ENCODE measurements at regions of chr18 and their contacts with region 1.

Region 1: GRCh38 chr18:37537868-37538525 is 27.6 kb downstream of the CELF4 start:
- DNase-seq: peak in 1 of 2 experiments; percentile 95
- H3K4me3 ChIP-seq: peak overlapping the region in 2 of 4 experiments; percentile 34 to 52; a peak in 3 of 8 replicates
- H3K27ac ChIP-seq: 0 out of 2 replicates have a peak overlapping the region, but pooled peaks have one; percentile 48
- H3K4me1 ChIP-seq: peaks cover 13 to 17% (median 15%) of the 10 kb centered on the region in 4 experiments
- H3K27me3 ChIP-seq: peaks cover 0 to 5% (median 4%) of the 10 kb centered on the region in 4 experiments; a peak in 4 of 7 replicates
- CTCF ChIP-seq: peak; percentile 84 to 90 (median 85)
- EP300 ChIP-seq: no peak
- POLR2A ChIP-seq: 0 out of 3 replicates have a peak, but pooled peaks of 1 of the 2 experiments have one; percentile 2
- RAD21 ChIP-seq: peak; percentile 81 to 89

Region 2: GRCh38 chr18:37391698-37392548 is 146.1 kb before region 1 on chr18:
- CTCF ChIA-PET with region 1: interaction called, 19 read pairs
- POLR2A ChIA-PET with region 1: no interaction called
- DNase-seq: no peak
- H3K4me3 ChIP-seq: no peak overlapping the region
- H3K27ac ChIP-seq: no peak overlapping the region
- H3K4me1 ChIP-seq: peaks cover 0 to 17% (median 14%) of the 10 kb centered on the region in 4 experiments; a peak in 6 of 7 replicates
- H3K27me3 ChIP-seq: peaks cover 4 to 40% (median 27%) of the 10 kb centered on the region in 4 experiments
- CTCF ChIP-seq: no peak
- EP300 ChIP-seq: no peak
- POLR2A ChIP-seq: no peak
- RAD21 ChIP-seq: no peak

Region 3: GRCh38 chr18:37445368-37445767 is 92.6 kb before region 1 on chr18:
- CTCF ChIA-PET with region 1: interaction called, 31 read pairs
- POLR2A ChIA-PET with region 1: no interaction called
- DNase-seq: no peak
- H3K4me3 ChIP-seq: no peak overlapping the region
- H3K27ac ChIP-seq: no peak overlapping the region
- H3K4me1 ChIP-seq: peaks cover 0 to 16% (median 10%) of the 10 kb centered on the region in 4 experiments; a peak in 6 of 7 replicates
- H3K27me3 ChIP-seq: no peaks in the 10 kb centered on the region
- CTCF ChIP-seq: no peak
- EP300 ChIP-seq: no peak
- POLR2A ChIP-seq: no peak
- RAD21 ChIP-seq: no peak

Region 4: GRCh38 chr18:37493352-37493935 is 44.6 kb before region 1 on chr18:
- CTCF ChIA-PET with region 1: interaction called, 93 read pairs
- POLR2A ChIA-PET with region 1: no interaction called
- DNase-seq: no peak
- H3K4me3 ChIP-seq: no peak overlapping the region
- H3K27ac ChIP-seq: no peak overlapping the region
- H3K4me1 ChIP-seq: peaks cover 0 to 29% (median 11%) of the 10 kb centered on the region in 4 experiments; a peak in 6 of 7 replicates
- H3K27me3 ChIP-seq: peaks cover 0 to 3% (median 0%) of the 10 kb centered on the region in 4 experiments; a peak in 4 of 7 replicates
- CTCF ChIP-seq: peak in 1 of 3 experiments; percentile 19; a peak in 1 of 4 replicates
- EP300 ChIP-seq: no peak
- POLR2A ChIP-seq: no peak
- RAD21 ChIP-seq: peak; percentile 11 to 31; a peak in 1 of 4 replicates

Region 5: DNA sequence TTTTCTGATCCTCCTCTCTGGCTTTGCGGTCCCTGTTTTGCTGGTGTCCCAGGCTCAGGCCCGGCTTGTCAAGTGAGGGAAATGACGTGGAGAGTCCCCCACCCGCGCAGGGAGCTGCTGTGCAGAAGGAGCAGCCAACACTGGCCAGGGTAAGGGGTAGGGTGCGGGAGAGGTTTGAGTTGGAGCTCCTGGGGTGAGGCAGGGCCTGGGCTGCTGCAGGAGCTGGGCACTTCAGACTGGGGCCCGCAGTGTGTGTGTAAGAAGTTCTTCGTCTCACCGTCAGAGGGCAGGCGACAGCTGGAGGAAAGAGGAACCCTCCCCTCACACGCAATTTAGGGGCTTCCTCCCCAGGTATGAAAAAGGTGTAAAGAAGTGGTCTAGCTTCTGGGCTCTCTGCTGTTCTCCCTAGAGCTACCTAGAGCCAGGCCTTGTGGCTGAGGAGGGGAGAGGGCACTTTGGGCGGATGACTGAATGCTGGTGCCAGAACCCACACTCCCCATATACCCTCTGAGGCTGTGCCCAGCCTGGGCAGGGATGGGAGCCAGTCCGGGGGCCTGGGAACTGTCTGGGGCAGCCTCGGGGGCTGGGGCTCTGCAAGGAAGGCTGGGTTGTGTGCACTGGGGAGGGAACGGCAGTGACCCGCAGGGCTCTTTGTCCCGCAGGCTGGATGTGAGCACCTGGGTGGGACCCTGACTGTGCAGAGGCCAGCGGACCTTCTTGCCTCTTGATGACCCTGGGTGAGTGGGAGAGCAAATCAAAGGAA is 15.8 kb after region 1 on chr18:
- CTCF ChIA-PET with region 1: interaction called, 23 read pairs
- POLR2A ChIA-PET with region 1: interaction called, 3 read pairs
- DNase-seq: peak in 1 of 2 experiments; percentile 69
- H3K4me3 ChIP-seq: peak overlapping the region in 3 of 4 experiments; percentile 18 to 47 (median 29); a peak in 6 of 8 replicates
- H3K27ac ChIP-seq: no peak overlapping the region
- H3K4me1 ChIP-seq: peaks cover 5 to 13% (median 7%) of the 10 kb centered on the region in 4 experiments; a peak in 6 of 7 replicates
- H3K27me3 ChIP-seq: peaks cover 0 to 15% (median 11%) of the 10 kb centered on the region in 4 experiments; a peak in 6 of 7 replicates
- CTCF ChIP-seq: peak; percentile 69 to 80 (median 80)
- EP300 ChIP-seq: no peak
- POLR2A ChIP-seq: no peak
- RAD21 ChIP-seq: peak; percentile 73 to 74